ENCODE measurements at regions of chr4 and their contacts with region 1.

Region 1: GRCh38 chr4:25439918-25440477 is 62.9 kb downstream of the ANAPC4 start:
- DNase-seq: peak in 1 of 2 donors; percentile 73
- H3K4me3 ChIP-seq: no peak overlapping the region
- H3K27ac ChIP-seq: peak overlapping the region; percentile 13 to 25
- H3K4me1 ChIP-seq: peaks cover 0 to 4% of the 10 kb centered on the region in 2 donors
- H3K27me3 ChIP-seq: no peaks in the 10 kb centered on the region
- CTCF ChIP-seq: peak in 2 of 3 experiments; percentile 77 to 86

Region 2: DNA sequence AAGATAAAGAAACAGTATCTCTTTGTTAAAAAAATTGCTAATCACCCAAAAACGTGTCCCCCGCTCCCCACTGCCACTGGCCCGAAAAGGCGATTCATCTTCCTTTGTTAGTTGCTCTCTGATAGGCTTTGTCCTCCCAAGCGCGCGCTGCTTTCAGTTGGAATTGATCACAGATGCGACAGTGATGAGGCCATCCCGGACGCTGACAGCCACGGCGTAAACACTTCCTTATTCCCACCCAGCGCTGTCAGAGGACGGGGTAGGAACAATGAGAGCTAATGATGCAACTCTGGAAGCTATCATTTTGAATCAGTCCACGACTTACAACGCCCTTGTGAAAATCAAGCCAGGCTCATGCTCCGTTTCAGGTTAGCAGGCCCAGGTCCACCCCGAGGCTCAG is 623.2 kb before region 1 on chr4:
- intact Hi-C with region 1: no loop called
- DNase-seq: no peak
- H3K4me3 ChIP-seq: no peak overlapping the region
- H3K27ac ChIP-seq: no peak overlapping the region
- H3K4me1 ChIP-seq: no peaks in the 10 kb centered on the region
- H3K27me3 ChIP-seq: no peaks in the 10 kb centered on the region
- CTCF ChIP-seq: no peak

Region 3: GRCh38 chr4:25172961-25173915 is 266.8 kb before region 1 on chr4:
- intact Hi-C with region 1: no loop called
- DNase-seq: peak; percentile 28 to 89
- H3K4me3 ChIP-seq: no peak overlapping the region
- H3K27ac ChIP-seq: peak overlapping the region; percentile 76 to 78
- H3K4me1 ChIP-seq: peaks cover 2 to 14% of the 10 kb centered on the region in 2 donors
- H3K27me3 ChIP-seq: no peaks in the 10 kb centered on the region
- CTCF ChIP-seq: no peak

Region 4: GRCh38 chr4:25767877-25768725 is 328.1 kb after region 1 on chr4:
- intact Hi-C with region 1: loop called (anchors 2 kb)
- DNase-seq: no peak
- H3K4me3 ChIP-seq: no peak overlapping the region
- H3K27ac ChIP-seq: no peak overlapping the region
- H3K4me1 ChIP-seq: no peaks in the 10 kb centered on the region
- H3K27me3 ChIP-seq: no peaks in the 10 kb centered on the region
- CTCF ChIP-seq: peak in 2 of 3 experiments; percentile 45 to 57

Measured in ascending aorta (tissue), 2 donors.